ENCODE measurements at regions of chr1 and their contacts with region 1.

Region 1: DNA sequence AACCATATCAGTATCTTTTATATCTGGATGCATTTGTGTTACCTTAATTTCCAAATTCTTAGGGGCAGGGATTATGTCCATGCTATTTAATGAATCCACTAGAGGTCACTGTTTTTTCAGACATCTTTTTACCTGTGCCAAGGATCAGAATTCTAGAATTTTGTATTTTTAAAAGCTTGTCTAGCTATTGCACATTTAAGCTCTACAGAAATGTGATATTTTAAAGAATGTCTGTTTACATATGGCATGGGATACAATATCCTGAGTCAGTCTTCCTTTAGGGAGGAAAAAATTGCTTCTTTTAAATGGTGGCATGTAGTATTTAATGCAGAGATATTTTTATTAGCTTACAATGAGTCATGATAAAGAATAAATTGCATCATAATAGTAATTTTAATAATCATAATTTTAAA is 11.3 kb downstream of the RPAP2 start:
- DNase-seq: no peak
- ATAC-seq: peak in 1 of 8 donors; percentile 28
- H3K4me3 ChIP-seq: no peak overlapping the region
- H3K27ac ChIP-seq: no peak overlapping the region
- H3K4me1 ChIP-seq: no peaks in the 10 kb centered on the region
- H3K27me3 ChIP-seq: no peaks in the 10 kb centered on the region
- CTCF ChIP-seq: peak; percentile 30 to 77 (median 66)

Region 2: DNA sequence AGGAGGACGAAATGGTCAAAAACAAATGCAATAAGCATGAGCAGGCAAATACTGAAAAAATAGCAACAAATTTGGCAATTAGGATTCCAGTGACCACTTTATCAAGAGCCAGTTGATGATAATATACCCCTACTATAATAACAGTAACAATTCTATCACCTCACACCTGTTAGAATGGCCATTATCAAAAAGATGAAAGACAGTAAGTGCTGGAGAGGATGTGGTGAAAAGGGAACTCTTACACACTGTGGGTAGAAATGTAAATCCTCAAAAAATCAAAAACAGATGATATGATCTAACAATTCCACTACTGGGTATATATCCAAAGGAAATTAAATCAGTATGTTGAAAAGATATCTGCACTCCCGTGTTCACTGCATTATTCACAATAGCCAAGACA is 290.9 kb after region 1 on chr1:
- intact Hi-C with region 1: loop called in 1 of 10 experiments (anchors 10 kb)
- DNase-seq: no peak
- ATAC-seq: no peak
- H3K4me3 ChIP-seq: no peak overlapping the region
- H3K27ac ChIP-seq: no peak overlapping the region
- H3K4me1 ChIP-seq: no peaks in the 10 kb centered on the region
- H3K27me3 ChIP-seq: no peaks in the 10 kb centered on the region
- CTCF ChIP-seq: no peak

Region 3: DNA sequence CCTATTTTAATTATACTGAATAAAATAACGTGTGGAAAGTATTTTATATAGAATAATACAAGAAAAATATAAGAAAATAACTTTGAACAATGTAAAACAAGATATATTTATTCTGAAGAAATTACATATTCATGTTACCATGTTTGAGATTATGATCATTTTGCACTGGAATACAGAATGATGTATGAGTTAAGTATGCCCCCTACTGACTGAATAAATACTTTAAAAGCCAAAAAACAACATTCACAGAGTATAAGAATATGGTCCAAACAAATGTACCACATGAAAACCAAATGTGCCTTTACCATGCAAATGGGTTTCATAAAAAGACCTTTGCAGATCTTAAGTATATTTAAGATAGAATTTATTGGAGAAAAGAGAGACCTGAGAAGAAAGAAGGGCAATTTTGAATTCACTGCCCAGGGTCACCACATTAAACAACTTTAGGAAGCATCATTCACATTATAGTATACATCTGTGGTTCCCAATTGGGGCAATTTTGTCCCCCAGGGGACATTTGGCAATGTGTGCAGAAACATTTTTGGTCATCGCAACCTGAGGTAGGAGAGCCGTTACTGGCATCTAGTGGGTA is 313.1 kb after region 1 on chr1:
- intact Hi-C with region 1: loop called in 5 of 10 experiments (anchors 2 to 10 kb)
- DNase-seq: no peak
- ATAC-seq: no peak
- H3K4me3 ChIP-seq: no peak overlapping the region
- H3K27ac ChIP-seq: no peak overlapping the region
- H3K4me1 ChIP-seq: no peaks in the 10 kb centered on the region
- H3K27me3 ChIP-seq: no peaks in the 10 kb centered on the region
- CTCF ChIP-seq: peak in 8 of 9 donors; percentile 6 to 58 (median 40)